Mammary epithelial cell (primary cell): ENCODE measurements at regions of chr18 and their contacts with region 1.

Region 1: DNA sequence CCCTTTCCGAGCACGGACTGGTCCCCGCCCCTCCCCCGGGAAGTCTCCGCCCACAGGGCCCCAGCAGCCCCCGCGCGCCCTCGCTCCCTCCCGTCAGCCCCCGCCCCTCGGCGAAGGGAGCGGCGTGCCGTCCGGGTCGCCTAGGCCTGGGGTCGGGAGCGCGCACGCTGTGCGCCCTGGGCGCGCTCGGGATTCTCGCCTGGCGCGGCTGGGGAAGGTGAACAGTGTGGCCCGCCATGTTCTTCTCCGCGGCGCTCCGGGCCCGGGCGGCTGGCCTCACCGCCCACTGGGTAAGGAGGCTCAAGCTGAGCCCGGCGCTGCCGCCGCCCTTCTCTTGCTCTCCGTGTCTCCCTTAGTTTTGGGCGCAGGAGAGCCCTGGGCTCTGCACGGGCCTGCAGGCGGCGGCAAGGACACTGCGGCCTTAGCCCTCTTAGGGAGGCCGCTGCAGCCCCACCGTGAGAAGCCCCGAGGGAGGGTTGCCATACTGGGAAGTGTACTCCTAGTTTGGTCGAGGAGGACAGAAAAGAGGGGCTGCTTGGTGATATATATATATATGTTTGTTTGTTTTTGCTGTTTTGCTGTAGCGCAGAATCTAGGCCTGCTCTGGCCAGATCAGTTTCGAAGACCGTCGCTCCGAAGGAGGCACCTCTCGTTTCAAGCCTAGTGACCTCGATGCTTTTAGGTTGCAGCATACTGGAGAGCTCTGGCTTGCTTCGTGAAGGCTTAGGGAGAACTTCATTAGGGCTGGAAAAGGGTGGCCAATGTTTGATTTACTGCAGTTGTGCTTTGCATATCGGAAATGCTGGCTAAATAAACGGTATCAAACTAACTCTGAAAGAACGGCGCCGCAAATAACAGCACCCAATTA is at the start of gene NDUFV2:
- DNase-seq: peak; percentile 96
- H3K4me3 ChIP-seq: peak within 1 kb of the TSS; percentile 74 to 92 (median 87)
- H3K27ac ChIP-seq: peak within 1 kb of the TSS; percentile 89
- H3K4me1 ChIP-seq: peaks cover 26% of the 10 kb centered on the region
- H3K27me3 ChIP-seq: no peaks in the 10 kb centered on the region
- CTCF ChIP-seq: no peak
- total RNA-seq, gene NDUFV2: 69.2 to 142 TPM

Region 2: GRCh38 chr18:9117980-9118841 is 15.5 kb after region 1 on chr18:
- CTCF ChIA-PET with region 1: no interaction called
- dilution Hi-C with region 1: no loop called
- in situ Hi-C with region 1: no loop called
- intact Hi-C with region 1: loop called (anchors 2 kb)
- DNase-seq: peak; percentile 52
- H3K4me3 ChIP-seq: peak overlapping the region in 1 of 3 experiments; percentile 31
- H3K27ac ChIP-seq: peak overlapping the region; percentile 70
- H3K4me1 ChIP-seq: peaks cover 30% of the 10 kb centered on the region
- H3K27me3 ChIP-seq: no peaks in the 10 kb centered on the region
- CTCF ChIP-seq: no peak

Region 3: DNA sequence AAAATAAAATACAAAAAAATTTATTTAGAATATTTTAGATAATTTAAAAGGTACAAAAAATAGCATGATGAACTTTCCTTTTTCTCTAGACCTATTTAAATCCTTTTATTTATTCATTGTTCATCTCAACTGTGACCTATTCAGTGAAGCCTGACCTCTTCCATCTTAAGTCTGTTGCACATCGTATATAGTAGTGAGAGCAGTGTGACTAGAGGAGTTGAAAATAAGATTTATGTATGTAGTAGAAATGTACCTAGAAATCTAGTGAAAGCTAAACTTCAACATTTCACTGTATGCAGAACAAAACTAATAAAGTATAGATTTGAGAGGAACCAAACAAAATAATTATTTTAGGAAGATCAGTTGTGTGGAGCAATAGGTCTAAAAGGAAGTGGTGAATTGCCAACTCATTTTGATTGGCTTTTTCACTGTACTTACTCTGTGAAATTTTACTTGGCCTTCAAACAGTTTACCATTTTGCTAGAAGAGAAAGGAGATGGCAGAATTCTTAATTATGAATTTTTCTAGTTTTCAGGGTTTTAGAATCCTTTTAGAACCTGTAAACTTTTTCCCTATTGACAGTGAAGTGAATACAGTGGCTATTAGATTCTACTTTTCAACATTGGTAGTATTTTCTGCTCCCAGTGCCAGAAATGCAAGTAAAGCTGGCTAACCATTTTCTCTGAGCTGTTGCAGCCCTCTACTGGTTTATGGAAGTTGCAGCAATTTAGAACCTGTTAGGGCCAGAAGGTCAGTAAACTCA is 44.9 kb after region 1 on chr18:
- CTCF ChIA-PET with region 1: interaction called, 3 read pairs
- dilution Hi-C with region 1: no loop called
- in situ Hi-C with region 1: no loop called
- intact Hi-C with region 1: loop called (anchors 1 kb)
- DNase-seq: peak; percentile 62
- H3K4me3 ChIP-seq: no peak overlapping the region
- H3K27ac ChIP-seq: peak overlapping the region; percentile 60
- H3K4me1 ChIP-seq: peaks cover 12% of the 10 kb centered on the region
- H3K27me3 ChIP-seq: no peaks in the 10 kb centered on the region
- CTCF ChIP-seq: peak; percentile 62 to 86

Region 4: DNA sequence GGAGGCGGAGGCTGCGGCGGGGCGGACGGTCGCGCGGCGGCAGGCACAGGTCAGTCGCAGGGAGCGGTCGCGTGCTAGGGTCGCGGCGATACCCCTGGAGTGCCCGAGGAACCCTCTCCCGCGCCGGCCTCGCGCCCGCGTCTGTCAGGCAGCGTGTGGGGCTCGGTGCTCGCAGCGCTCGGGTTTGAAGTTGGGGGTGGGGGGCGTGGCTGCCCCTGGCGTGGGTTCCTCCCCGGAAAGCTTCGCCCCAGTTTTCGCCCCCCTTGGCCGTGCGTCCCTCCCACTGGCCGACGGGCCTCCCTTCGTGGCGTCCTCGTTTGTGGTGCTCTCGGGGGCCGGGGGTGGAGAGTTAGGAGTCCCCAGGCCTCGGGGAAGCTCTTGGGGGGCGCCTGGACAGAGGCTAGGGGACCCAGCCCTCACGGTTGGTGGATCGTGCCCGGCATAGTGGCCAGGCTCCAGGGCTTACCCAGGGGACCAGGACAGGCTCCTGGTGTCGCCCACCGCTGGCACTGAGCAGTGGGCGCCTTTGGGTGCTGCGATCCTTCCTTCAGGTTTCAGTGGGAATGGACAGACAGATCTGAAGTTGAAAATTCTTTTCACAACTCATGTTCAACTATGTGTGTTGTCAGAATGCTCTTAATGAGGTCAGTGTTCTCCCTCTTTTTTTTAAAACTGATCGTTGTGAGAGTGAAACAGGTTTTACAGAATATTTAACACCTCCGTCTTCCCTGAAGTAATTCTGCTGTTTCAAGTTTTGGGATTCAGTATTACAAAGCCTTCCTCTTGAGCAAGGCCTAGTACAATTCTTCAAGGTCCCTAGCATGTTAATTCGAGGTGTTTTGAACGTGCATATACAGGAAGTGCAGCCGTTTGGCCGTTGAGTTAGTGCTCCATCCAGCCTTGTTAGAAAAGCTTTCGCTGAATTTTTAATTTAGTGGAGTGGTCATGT is 373.2 kb after region 1 on chr18:
- CTCF ChIA-PET with region 1: no interaction called
- dilution Hi-C with region 1: no loop called
- in situ Hi-C with region 1: no loop called
- intact Hi-C with region 1: no loop called
- DNase-seq: peak; percentile 37
- H3K4me3 ChIP-seq: peak overlapping the region; percentile 67 to 98 (median 93)
- H3K27ac ChIP-seq: peak overlapping the region; percentile 91
- H3K4me1 ChIP-seq: peaks cover 13% of the 10 kb centered on the region
- H3K27me3 ChIP-seq: no peaks in the 10 kb centered on the region
- CTCF ChIP-seq: no peak